ENCODE measurements at regions of chr19 and their contacts with region 1.

Region 1: DNA sequence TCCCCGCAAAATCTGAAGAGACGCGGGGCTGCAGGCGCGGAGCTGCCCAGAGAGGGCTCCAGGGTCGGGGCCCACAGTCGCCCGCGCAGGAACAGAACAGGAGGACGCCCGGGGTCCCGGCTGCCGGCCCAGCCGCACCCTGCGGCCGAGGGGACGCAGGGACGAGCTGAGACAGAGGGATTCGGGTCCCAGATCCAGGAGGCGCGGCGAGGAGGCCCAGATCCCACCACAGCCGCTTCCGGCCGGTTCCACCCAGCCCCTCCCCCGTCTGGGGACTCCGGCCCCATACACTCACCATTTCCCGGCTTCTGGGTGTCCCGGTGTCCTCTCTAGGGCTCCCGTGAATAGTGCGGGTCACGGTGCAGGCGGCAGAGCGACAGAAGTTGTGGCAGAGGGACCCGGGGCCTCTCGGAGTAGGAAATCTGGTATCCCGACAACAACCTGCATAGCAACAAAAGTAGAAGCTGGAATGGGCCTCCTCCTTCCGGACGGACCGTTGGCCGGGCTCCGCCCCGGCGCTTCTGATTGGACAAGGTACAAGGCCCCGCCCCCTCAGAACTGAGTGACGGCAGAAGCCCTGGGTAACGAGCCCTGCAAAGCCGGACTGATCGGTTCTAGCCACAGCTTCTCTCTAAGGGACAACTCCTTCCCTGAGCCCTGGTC is at the start of gene ZNF20:
- DNase-seq: peak; percentile 92 to 95 (median 94)
- ATAC-seq: peak; percentile 99
- H3K4me3 ChIP-seq: peak within 1 kb of the TSS; percentile 69
- H3K27ac ChIP-seq: peak within 1 kb of the TSS; percentile 79; the same call in 2 of the 3 replicates
- H3K4me1 ChIP-seq: peaks cover 5 to 12% of the 10 kb centered on the region in 2 experiments; a peak in 4 of 5 replicates
- H3K27me3 ChIP-seq: no peaks in the 10 kb centered on the region
- CTCF ChIP-seq: no peak
- EP300 ChIP-seq: peak; percentile 37
- POLR2A ChIP-seq: peak; percentile 65
- RAD21 ChIP-seq: no peak
- polyA plus RNA-seq, gene ZNF20: 3.3 to 3.4 TPM

Region 2: GRCh38 chr19:11659612-11660011 is 480.4 kb before region 1 on chr19:
- CTCF ChIA-PET with region 1: no interaction called
- POLR2A ChIA-PET with region 1: no interaction called
- in situ Hi-C with region 1: loop called (anchors 5 kb)
- intact Hi-C with region 1: no loop called
- DNase-seq: peak; percentile 37 to 47 (median 42)
- ATAC-seq: peak; percentile 64; the same call in 2 of the 3 replicates
- H3K4me3 ChIP-seq: no peak overlapping the region
- H3K27ac ChIP-seq: no peak overlapping the region
- H3K4me1 ChIP-seq: peaks cover 4 to 7% of the 10 kb centered on the region in 2 experiments; a peak in 3 of 5 replicates
- H3K27me3 ChIP-seq: no peaks in the 10 kb centered on the region
- CTCF ChIP-seq: peak; percentile 46 to 65 (median 59); a peak in 5 of 6 replicates
- EP300 ChIP-seq: no peak
- POLR2A ChIP-seq: no peak
- RAD21 ChIP-seq: peak; percentile 38 to 62

Region 3: GRCh38 chr19:11881151-11881800 is 258.7 kb before region 1 on chr19:
- CTCF ChIA-PET with region 1: interaction called, 7 read pairs
- POLR2A ChIA-PET with region 1: interaction called, 5 read pairs
- in situ Hi-C with region 1: loop called (anchors 5 kb)
- intact Hi-C with region 1: loop called (anchors 1 kb)
- DNase-seq: peak; percentile 56 to 77 (median 64)
- ATAC-seq: peak; percentile 87
- H3K4me3 ChIP-seq: no peak overlapping the region
- H3K27ac ChIP-seq: no peak overlapping the region
- H3K4me1 ChIP-seq: no peaks in the 10 kb centered on the region
- H3K27me3 ChIP-seq: no peaks in the 10 kb centered on the region; a peak in 2 of 5 replicates
- CTCF ChIP-seq: peak; percentile 75 to 81 (median 81)
- EP300 ChIP-seq: no peak
- POLR2A ChIP-seq: no peak
- RAD21 ChIP-seq: peak; percentile 72 to 90

Region 4: DNA sequence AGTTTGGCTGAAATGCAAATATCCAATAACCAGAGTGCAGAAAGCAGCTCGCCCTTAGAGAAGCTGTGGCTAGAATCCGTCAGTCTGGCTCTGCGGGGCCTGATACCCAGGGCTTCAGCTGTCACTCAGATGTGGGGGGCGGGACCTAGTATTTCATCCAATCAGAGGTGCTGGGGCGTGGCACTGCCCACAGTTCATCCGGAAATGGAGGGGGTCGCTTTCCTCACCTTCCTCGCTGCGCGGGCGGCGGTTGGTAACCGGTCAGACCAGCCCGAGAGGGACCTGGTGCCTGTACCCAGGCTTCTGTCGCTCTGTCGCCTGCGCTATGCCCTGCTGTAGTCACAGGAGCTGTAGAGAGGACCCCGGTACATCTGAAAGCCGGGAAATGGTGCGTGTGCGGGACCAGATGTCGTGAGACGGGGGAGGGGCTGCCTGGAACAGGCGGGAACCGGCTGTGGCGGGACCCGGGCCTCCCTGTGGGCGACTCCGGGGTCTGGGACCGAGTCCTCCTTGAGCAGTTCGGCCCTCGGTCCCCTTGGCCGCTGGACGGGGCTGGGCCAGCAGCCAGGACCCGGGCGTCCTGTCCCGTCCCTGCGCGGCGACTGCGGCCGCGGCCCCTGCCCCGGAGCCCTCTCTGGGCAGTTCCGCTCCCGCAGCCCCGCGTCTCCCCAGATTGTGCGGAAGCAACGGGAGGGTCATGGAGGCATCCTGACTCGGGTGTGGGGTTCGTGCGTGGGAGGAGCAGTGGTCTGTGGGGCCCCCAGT is 214.9 kb before region 1 on chr19 and contains the start of gene ZNF700:
- CTCF ChIA-PET with region 1: interaction called, 3 read pairs
- POLR2A ChIA-PET with region 1: interaction called, 3 read pairs
- in situ Hi-C with region 1: no loop called
- intact Hi-C with region 1: loop called (anchors 1 kb)
- DNase-seq: peak; percentile 94 to 97 (median 94)
- ATAC-seq: peak; percentile 96
- H3K4me3 ChIP-seq: peak within 1 kb of the TSS; percentile 83
- H3K27ac ChIP-seq: peak within 1 kb of the TSS; percentile 94
- H3K4me1 ChIP-seq: peaks cover 12 to 26% of the 10 kb centered on the region in 2 experiments; a peak in 4 of 5 replicates
- H3K27me3 ChIP-seq: no peaks in the 10 kb centered on the region
- CTCF ChIP-seq: no peak
- EP300 ChIP-seq: peak; percentile 5; the same call in 1 of the 2 replicates
- POLR2A ChIP-seq: peak; percentile 97
- RAD21 ChIP-seq: no peak
- polyA plus RNA-seq, gene ZNF700: 11.5 to 13.3 TPM

Region 5: GRCh38 chr19:11987405-11988281 is 152.4 kb before region 1 on chr19:
- CTCF ChIA-PET with region 1: no interaction called
- POLR2A ChIA-PET with region 1: no interaction called
- in situ Hi-C with region 1: no loop called
- intact Hi-C with region 1: loop called (anchors 5 kb)
- DNase-seq: peak; percentile 79 to 85 (median 82)
- ATAC-seq: peak; percentile 98
- H3K4me3 ChIP-seq: peak overlapping the region; percentile 54
- H3K27ac ChIP-seq: peak overlapping the region; percentile 77
- H3K4me1 ChIP-seq: peaks cover 0 to 3% of the 10 kb centered on the region in 2 experiments; a peak in 2 of 5 replicates
- H3K27me3 ChIP-seq: no peaks in the 10 kb centered on the region
- CTCF ChIP-seq: no peak
- EP300 ChIP-seq: no peak
- POLR2A ChIP-seq: peak; percentile 76
- RAD21 ChIP-seq: no peak

Region 6: DNA sequence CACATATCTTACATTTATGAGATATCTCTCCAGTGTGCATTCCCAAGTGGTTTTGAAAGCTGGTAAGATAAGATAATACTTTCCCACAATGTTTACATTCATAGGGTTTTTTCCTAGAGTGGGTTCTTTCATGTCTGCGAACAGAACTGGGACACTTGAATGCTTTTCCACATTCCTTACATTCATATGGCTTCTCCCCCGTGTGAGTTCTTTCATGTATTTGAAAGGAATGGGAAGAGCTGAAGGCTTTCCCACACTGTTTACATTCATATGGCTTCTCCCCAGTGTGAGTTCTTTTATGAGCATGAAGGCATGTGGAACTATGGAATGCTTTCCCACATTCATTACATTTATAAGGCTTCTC is 124.3 kb before region 1 on chr19:
- CTCF ChIA-PET with region 1: no interaction called
- POLR2A ChIA-PET with region 1: no interaction called
- in situ Hi-C with region 1: no loop called
- intact Hi-C with region 1: no loop called
- DNase-seq: no peak
- ATAC-seq: no peak
- H3K4me3 ChIP-seq: no peak overlapping the region
- H3K27ac ChIP-seq: no peak overlapping the region
- H3K4me1 ChIP-seq: no peaks in the 10 kb centered on the region
- H3K27me3 ChIP-seq: no peaks in the 10 kb centered on the region
- CTCF ChIP-seq: no peak
- EP300 ChIP-seq: no peak
- POLR2A ChIP-seq: no peak
- RAD21 ChIP-seq: no peak

Region 7: DNA sequence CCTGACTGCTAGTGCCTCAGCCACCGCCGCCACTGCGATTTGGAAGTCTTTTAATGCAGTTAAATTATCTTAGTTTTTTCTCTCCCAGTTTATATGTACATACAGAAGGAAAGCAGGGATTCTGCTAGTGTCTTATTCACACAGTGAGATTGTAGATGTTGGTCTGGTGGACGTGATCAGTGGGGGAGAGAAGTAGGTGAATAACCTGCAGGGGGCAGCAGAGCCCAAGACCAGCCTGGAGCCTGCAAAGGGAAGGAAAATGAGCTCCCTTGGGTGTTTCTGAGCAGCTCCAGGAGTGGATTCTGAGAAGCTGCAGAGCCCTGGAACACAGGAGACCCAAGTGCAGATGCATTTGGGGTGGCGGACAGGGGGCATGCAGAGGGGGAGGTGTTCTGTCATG is 49.2 kb before region 1 on chr19:
- CTCF ChIA-PET with region 1: no interaction called
- POLR2A ChIA-PET with region 1: interaction called, 3 read pairs
- in situ Hi-C with region 1: no loop called
- intact Hi-C with region 1: loop called (anchors 2 kb)
- DNase-seq: peak; percentile 57 to 76 (median 62)
- ATAC-seq: peak; percentile 74
- H3K4me3 ChIP-seq: no peak overlapping the region
- H3K27ac ChIP-seq: no peak overlapping the region
- H3K4me1 ChIP-seq: peaks cover 0 to 10% of the 10 kb centered on the region in 2 experiments; a peak in 2 of 5 replicates
- H3K27me3 ChIP-seq: no peaks in the 10 kb centered on the region
- CTCF ChIP-seq: peak; percentile 68 to 74 (median 69)
- EP300 ChIP-seq: no peak
- POLR2A ChIP-seq: no peak
- RAD21 ChIP-seq: peak; percentile 19 to 65; a peak in 3 of 4 replicates